ENCODE measurements at regions of chr2 and their contacts with region 1.

Region 1: GRCh38 chr2:70132244-70133126 is 45.2 kb downstream of the PCBP1 start:
- DNase-seq: no peak
- ATAC-seq: peak; percentile 51
- H3K4me3 Mint-ChIP-seq: peak overlapping the region; percentile 84
- H3K27ac Mint-ChIP-seq: peak overlapping the region; percentile 96
- H3K4me1 Mint-ChIP-seq: peaks cover 60% of the 10 kb centered on the region
- H3K27me3 Mint-ChIP-seq: no peaks in the 10 kb centered on the region

Region 2: DNA sequence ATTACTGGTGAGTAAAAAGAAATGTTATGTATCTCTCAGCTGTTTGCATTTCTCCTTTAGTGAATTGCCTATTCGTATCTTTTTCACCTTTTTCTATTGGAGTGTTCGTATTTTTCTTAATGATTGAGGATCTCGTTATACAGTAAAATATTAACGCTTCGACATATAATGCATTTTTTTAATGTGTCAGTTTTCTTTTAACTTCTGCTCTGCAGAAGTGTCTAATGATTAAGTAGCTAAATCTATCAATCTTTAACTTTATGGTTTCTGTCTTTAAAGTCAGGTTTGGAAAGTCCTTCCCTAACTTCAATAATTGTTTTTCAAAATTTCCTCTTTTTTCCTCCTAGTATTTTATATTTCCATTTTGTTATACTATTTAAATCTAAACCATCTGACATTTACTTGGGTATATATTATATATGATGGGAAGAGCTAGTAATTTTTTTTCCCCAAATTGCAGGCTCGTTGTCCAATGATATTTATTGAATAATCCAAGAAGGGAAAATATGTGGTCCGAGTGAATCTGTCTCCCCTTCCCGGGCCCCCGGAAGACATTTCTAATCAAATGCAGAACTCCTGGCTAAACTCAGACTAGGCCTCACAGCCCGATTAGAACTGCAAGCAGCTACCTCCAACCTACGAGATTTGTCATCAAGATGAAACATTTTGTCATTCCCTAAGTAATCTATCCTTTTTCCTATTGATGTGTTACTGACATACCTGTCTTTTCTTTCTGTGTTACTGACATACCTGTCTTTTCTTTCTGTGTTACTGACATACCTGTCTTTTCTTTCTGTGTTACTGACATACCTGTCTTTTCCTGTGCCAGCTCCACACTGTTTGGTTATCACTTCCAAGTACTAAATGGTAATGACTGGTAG is 28.0 kb before region 1 on chr2:
- POLR2A ChIA-PET with region 1: interaction called, 169 read pairs
- DNase-seq: no peak
- ATAC-seq: no peak
- H3K4me3 Mint-ChIP-seq: peak overlapping the region; percentile 85
- H3K27ac Mint-ChIP-seq: peak overlapping the region; percentile 96
- H3K4me1 Mint-ChIP-seq: peaks cover 50% of the 10 kb centered on the region
- H3K27me3 Mint-ChIP-seq: no peaks in the 10 kb centered on the region

Region 3: GRCh38 chr2:70115646-70116442 is 16.6 kb before region 1 on chr2:
- POLR2A ChIA-PET with region 1: interaction called, 169 read pairs
- DNase-seq: no peak
- ATAC-seq: peak; percentile 66
- H3K4me3 Mint-ChIP-seq: peak overlapping the region; percentile 50
- H3K27ac Mint-ChIP-seq: peak overlapping the region; percentile 73
- H3K4me1 Mint-ChIP-seq: peaks cover 34% of the 10 kb centered on the region
- H3K27me3 Mint-ChIP-seq: no peaks in the 10 kb centered on the region